ENCODE measurements at regions of chr17 and their contacts with region 1.

Region 1: DNA sequence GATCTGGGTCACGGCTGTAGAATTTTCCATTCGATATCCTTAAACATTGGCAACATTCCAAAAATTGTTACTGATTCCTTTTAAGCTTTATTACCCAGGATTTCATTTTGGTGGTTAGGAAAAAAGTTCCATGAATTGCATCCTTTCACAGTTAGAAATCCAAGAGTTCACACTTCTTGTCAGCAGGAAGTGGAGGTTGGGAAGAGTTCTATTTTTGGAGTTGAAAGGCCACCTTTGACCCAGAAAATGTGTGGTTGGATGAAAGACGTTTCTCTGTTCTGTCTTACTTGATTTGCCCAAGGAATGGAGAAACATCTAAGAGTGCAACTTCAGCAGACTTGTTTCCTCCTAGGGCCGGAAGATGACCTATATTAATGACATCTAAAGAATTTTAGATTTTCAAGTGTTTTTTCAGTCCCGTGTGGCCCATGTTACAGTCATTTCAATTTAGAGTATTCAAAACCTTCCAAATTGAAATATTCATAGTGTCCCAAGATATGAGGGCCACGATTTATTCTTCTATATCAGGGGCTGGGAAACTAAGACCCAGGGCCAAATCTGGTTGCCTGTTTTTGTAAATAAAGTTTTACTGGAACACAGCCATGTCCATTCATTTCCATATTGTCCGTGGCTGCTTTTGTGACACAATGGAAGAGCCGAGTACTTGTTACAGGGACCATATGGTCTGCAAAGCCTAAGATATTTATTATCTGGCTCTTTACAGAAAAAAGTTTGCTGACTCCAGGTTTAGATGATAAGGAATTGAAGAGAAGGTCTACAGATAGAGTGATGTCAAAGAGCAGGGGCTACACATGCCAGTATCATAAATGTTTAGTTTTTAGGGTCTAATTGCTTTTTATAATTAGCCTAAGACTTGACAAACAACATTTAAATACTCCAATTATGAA is 50.2 kb downstream of the CDK5R1 start:
- DNase-seq: peak; percentile 70
- H3K4me3 ChIP-seq: no peak overlapping the region
- H3K27ac ChIP-seq: peak overlapping the region; percentile 53
- H3K4me1 ChIP-seq: peaks cover 16% of the 10 kb centered on the region
- H3K27me3 ChIP-seq: no peaks in the 10 kb centered on the region
- CTCF ChIP-seq: no peak
- POLR2A ChIP-seq: no peak

Region 2: DNA sequence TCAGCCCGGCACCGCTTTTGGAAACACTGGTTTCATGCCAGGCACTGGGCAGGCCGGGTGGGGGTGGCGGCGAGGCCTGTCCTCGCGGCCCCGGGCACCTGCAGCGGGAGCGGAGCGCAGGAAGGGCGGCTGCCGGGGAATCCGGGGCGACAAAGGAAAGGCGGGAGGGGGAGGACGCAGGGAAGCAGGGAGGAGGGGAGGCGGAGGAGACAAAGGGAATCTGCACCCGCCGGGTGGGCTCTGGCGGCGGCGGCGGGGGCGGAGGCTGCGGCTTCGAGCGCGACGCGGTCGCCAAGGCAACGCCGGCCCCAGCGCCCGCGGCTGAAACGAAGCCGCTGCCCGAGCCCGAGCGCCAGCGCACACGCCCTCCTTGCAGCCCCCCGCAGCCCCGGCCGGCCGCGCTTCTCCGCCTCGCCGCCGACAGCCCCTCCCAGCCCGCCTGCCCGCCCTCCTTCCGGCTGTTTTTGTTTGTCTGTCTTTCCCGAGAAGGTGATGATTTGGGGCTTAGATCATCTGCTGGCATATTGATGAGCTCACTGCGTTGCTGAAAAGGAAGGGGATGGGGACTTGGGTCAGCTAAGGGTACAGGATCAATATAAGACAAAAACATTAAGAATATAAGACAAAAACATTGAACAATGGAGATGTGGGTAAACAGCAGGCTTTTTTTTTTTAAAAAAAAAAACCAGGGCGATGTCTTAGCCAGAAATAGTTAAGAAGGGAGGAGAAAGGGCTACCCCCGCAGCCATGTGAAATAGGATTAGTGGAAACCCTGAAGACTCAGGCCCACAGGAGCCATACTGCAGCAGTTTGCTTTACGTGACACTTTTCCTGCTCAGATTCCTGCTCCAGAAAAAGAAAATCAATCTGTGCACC is 17.5 kb before region 1 on chr17:
- CTCF ChIA-PET with region 1: no interaction called
- POLR2A ChIA-PET with region 1: no interaction called
- dilution Hi-C with region 1: no loop called
- intact Hi-C with region 1: loop called (anchors 1 kb)
- DNase-seq: peak; percentile 49
- H3K4me3 ChIP-seq: peak overlapping the region; percentile 6 to 50 (median 48)
- H3K27ac ChIP-seq: peak overlapping the region; percentile 66
- H3K4me1 ChIP-seq: peaks cover 19% of the 10 kb centered on the region
- H3K27me3 ChIP-seq: no peaks in the 10 kb centered on the region
- CTCF ChIP-seq: no peak
- POLR2A ChIP-seq: no peak